ENCODE measurements at regions of chr10 and their contacts with region 1.

Region 1: GRCh38 chr10:63976538-63976937 is 455.3 kb downstream of the REEP3 start:
- DNase-seq: peak; percentile 69
- H3K4me3 Mint-ChIP-seq: no peak overlapping the region
- H3K27ac Mint-ChIP-seq: no peak overlapping the region
- H3K4me1 Mint-ChIP-seq: no peaks in the 10 kb centered on the region
- H3K27me3 Mint-ChIP-seq: no peaks in the 10 kb centered on the region
- CTCF ChIP-seq: peak; percentile 65

Region 2: DNA sequence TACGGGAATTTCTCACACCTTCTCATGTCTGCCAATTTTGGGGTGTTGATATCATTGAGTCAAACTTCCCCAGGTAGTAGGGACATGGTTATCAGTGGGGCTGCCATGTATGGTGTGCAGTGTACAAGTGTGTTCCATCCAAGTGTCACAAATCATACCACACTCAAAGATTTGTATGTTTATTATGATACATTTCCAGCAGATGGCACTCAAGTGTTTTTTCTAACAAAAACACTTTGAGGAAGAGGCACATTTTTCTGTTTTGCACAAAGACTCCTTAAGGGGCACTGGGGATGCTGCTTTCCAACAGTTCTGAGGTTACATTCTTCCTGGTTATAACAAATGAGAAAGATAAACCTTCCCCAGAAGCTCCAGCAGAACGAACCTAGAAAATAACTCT is 40.8 kb before region 1 on chr10:
- CTCF ChIA-PET with region 1: interaction called, 77 read pairs
- POLR2A ChIA-PET with region 1: no interaction called
- intact Hi-C with region 1: no loop called
- DNase-seq: peak; percentile 22
- H3K4me3 Mint-ChIP-seq: no peak overlapping the region
- H3K27ac Mint-ChIP-seq: no peak overlapping the region
- H3K4me1 Mint-ChIP-seq: no peaks in the 10 kb centered on the region
- H3K27me3 Mint-ChIP-seq: peaks cover 22% of the 10 kb centered on the region
- CTCF ChIP-seq: peak; percentile 26

Region 3: GRCh38 chr10:63987212-63987611 is 10.7 kb after region 1 on chr10:
- CTCF ChIA-PET with region 1: interaction called, 12 read pairs
- POLR2A ChIA-PET with region 1: no interaction called
- intact Hi-C with region 1: no loop called
- DNase-seq: no peak
- H3K4me3 Mint-ChIP-seq: no peak overlapping the region
- H3K27ac Mint-ChIP-seq: no peak overlapping the region
- H3K4me1 Mint-ChIP-seq: peaks cover 10% of the 10 kb centered on the region
- H3K27me3 Mint-ChIP-seq: no peaks in the 10 kb centered on the region
- CTCF ChIP-seq: no peak

Region 4: DNA sequence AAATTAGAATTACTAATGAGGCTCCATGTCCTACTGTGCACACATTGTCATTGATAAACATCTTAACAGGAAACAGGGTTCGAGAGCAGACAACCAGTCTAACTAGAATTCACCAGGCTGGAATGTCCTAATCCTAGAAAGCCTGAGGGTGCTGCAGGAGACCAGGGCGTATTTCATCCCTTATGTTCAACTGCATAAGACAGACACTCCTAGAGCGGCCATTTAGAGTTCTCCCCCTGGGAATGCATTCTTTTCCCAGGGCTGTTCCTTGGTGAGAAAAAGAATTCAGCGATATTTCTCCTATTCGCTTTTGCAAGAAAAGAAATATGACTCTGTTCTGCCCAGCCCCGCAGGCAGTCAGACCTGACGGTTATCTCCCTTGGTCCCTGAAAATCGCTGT is 30.6 kb after region 1 on chr10:
- CTCF ChIA-PET with region 1: interaction called, 10 read pairs
- POLR2A ChIA-PET with region 1: no interaction called
- intact Hi-C with region 1: no loop called
- DNase-seq: no peak
- H3K4me3 Mint-ChIP-seq: no peak overlapping the region
- H3K27ac Mint-ChIP-seq: no peak overlapping the region
- H3K4me1 Mint-ChIP-seq: peaks cover 6% of the 10 kb centered on the region
- H3K27me3 Mint-ChIP-seq: no peaks in the 10 kb centered on the region
- CTCF ChIP-seq: no peak

Region 5: GRCh38 chr10:64071218-64071617 is 94.7 kb after region 1 on chr10:
- CTCF ChIA-PET with region 1: no interaction called
- POLR2A ChIA-PET with region 1: no interaction called
- intact Hi-C with region 1: no loop called
- DNase-seq: no peak
- H3K4me3 Mint-ChIP-seq: no peak overlapping the region
- H3K27ac Mint-ChIP-seq: no peak overlapping the region
- H3K4me1 Mint-ChIP-seq: peaks cover 6% of the 10 kb centered on the region
- H3K27me3 Mint-ChIP-seq: no peaks in the 10 kb centered on the region
- CTCF ChIP-seq: no peak

Measured in MCF 10A (cell line).